ENCODE measurements at regions of chr20 and their contacts with region 1.

Region 1: DNA sequence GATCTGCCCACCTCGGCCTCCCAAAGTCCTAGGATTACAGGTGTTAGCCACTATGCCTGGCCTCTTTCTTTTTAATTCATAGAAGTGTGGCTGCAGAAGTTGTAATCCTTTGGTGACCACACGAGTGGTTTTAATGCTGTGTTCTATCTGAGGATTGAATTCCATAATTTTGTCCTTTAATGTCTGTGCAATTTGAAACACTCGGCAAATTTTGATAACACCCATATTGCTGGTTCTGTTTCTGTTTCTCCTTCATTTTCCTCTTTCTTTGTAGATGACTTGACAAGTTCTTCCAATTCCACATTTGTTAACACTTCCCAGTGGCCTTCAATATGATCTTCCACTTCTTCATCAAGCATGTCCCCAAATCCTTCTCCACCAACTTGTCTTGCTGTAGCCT is 2.8 kb upstream of the CHMP4B start:
- DNase-seq: no peak
- H3K4me3 ChIP-seq: no peak overlapping the region
- H3K27ac ChIP-seq: no peak overlapping the region
- H3K4me1 ChIP-seq: peaks cover 0 to 4% of the 10 kb centered on the region in 2 donors
- H3K27me3 ChIP-seq: no peaks in the 10 kb centered on the region
- CTCF ChIP-seq: no peak
- POLR2A ChIP-seq: no peak

Region 2: DNA sequence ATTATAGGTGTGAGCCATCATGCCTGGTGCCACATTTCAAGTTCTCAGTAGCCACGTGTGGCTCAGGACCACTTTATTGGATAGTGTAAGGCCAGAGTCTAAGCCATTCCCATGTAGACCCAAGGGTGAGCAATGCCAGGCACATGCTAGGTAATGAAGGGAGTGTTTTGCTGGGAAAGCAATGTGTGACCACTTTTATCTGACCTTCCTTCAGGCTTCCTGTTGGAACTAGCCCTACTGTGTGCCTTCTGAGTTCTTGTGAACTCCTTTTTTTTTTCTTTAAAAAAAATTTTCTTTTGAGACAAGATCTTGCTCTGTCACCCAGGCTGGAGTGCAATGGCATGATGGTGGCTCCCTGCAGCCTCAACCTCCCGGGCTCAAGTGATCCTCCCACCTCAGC is 43.3 kb before region 1 on chr20:
- intact Hi-C with region 1: loop called (anchors 2 kb)
- DNase-seq: no peak
- H3K4me3 ChIP-seq: no peak overlapping the region
- H3K27ac ChIP-seq: no peak overlapping the region
- H3K4me1 ChIP-seq: no peaks in the 10 kb centered on the region
- H3K27me3 ChIP-seq: no peaks in the 10 kb centered on the region
- CTCF ChIP-seq: no peak
- POLR2A ChIP-seq: no peak